Naive thymus-derived CD8-positive, alpha-beta T cell (primary cell): ENCODE measurements at regions of chr7 and their contacts with region 1.

Region 1: DNA sequence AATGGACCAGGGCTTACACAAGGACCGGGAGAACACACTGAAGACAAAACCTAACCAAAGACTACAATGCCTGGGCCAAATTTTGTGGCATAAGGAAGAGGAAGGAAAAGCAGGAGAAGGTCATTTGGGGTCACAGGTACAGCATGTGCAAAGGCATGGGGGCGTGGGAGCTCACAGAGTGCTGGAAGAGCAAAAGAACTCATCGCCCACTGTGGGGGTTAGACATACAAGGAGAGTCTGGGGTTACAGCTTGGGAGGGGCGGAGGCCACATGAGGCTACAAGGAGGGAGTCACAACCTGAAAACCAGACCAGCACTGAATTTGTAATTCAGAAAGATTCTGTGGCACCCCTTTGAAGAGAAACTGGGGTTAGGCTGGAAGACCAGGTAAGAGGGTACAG is 9.7 kb downstream of the PUS7 start:
- DNase-seq: no peak
- ATAC-seq: no peak
- H3K4me3 Mint-ChIP-seq: no peak overlapping the region
- H3K27ac Mint-ChIP-seq: peak overlapping the region in 3 of 10 donors; percentile 30 to 62 (median 60)
- H3K4me1 Mint-ChIP-seq: peaks cover 6 to 16% (median 13%) of the 10 kb centered on the region in 4 donors
- H3K27me3 Mint-ChIP-seq: no peaks in the 10 kb centered on the region

Region 2: DNA sequence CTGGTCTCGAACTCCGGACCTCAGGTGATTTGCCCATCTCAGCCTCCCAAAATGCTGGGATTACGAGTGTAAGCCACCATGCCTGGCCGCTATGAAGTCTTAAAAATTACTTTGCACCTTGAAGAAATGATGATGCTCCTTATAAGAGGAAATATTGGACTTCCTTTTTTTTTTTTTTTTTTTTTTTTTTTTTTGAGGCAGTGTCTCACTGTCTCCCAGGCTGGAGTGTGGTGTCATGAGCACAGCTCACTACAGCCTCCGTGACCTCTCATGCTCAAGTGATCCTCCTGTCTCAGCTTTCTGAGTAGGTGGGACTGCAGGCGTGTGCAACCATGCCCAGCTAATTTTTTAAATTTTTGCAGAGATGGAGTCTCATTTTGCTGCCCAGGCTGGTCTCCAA is 433.1 kb before region 1 on chr7:
- POLR2A ChIA-PET with region 1: interaction called, 11 read pairs
- DNase-seq: no peak
- ATAC-seq: no peak
- H3K4me3 Mint-ChIP-seq: no peak overlapping the region
- H3K27ac Mint-ChIP-seq: peak overlapping the region in 2 of 10 donors; percentile 22 to 44
- H3K4me1 Mint-ChIP-seq: peaks cover 4 to 27% (median 15%) of the 10 kb centered on the region in 4 donors
- H3K27me3 Mint-ChIP-seq: no peaks in the 10 kb centered on the region

Region 3: DNA sequence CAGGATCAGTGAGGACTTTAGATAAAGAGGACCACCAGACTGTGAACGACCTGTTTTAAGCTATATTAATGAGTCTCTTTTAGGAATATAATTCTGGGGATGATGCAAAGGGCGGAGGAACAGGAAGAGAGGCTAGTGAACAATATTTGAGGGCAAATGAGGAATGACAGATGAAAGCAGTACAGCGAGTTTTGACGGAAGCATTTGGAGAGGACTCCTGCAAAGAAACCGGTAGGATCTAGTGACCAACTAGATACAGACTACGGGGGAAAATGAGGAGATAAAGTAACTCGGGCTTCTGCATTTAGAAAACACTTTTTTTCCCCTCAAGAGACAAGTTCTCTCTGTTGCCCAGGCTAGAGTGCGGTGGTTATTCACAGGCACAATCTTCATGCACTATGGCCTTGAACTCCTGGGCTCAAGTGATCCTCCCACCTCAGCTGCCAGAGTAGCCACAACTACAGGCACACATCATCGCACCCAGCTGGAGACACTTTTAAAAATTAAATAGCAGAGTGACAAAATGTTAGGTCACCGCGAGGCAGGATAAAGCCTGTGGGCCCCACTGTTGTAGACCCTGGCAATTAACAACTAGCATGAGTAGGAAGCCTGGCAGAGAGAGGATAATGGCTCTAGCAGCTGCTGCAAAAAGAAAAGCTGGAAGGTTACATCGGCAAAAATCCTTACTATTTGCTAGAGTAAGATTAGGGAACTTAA is 266.9 kb before region 1 on chr7:
- POLR2A ChIA-PET with region 1: no interaction called
- DNase-seq: no peak
- ATAC-seq: no peak
- H3K4me3 Mint-ChIP-seq: no peak overlapping the region
- H3K27ac Mint-ChIP-seq: no peak overlapping the region
- H3K4me1 Mint-ChIP-seq: peaks cover 18 to 34% (median 27%) of the 10 kb centered on the region in 4 donors
- H3K27me3 Mint-ChIP-seq: no peaks in the 10 kb centered on the region

Region 4: GRCh38 chr7:105524840-105525239 is 12.4 kb after region 1 on chr7:
- POLR2A ChIA-PET with region 1: no interaction called
- DNase-seq: no peak
- ATAC-seq: no peak
- H3K4me3 Mint-ChIP-seq: peak overlapping the region in 1 of 10 donors; percentile 55
- H3K27ac Mint-ChIP-seq: peak overlapping the region in 1 of 10 donors; percentile 31
- H3K4me1 Mint-ChIP-seq: peaks cover 5 to 21% (median 11%) of the 10 kb centered on the region in 4 donors
- H3K27me3 Mint-ChIP-seq: no peaks in the 10 kb centered on the region

Region 5: DNA sequence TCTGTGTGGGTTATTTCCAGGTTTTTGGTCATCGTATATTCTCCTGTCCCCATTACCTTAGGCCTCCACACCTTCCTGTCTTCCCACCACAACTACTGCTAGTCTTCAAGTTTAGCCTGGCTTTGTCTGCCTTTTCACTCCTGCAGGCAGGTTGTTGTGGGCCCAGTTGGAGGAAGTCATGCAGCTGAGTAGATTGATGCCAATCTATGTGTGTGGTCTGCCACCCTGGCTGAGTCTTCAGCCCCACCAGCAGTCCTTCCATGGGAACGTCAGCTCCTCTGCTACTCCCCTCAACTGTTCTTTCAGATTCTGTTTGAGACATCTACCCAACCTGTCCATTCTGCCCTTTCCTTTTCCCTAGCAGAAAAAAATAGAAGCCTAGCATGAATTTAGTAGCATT is 25.9 kb after region 1 on chr7:
- POLR2A ChIA-PET with region 1: no interaction called
- DNase-seq: no peak
- ATAC-seq: no peak
- H3K4me3 Mint-ChIP-seq: no peak overlapping the region
- H3K27ac Mint-ChIP-seq: peak overlapping the region in 1 of 10 donors; percentile 24
- H3K4me1 Mint-ChIP-seq: peaks cover 6 to 34% (median 25%) of the 10 kb centered on the region in 4 donors
- H3K27me3 Mint-ChIP-seq: no peaks in the 10 kb centered on the region

Region 6: GRCh38 chr7:105589356-105590077 is 77.1 kb after region 1 on chr7:
- POLR2A ChIA-PET with region 1: no interaction called
- DNase-seq: peak; percentile 11 to 70 (median 37)
- ATAC-seq: peak; percentile 92
- H3K4me3 Mint-ChIP-seq: no peak overlapping the region
- H3K27ac Mint-ChIP-seq: peak overlapping the region in 4 of 10 donors; percentile 4 to 73 (median 12)
- H3K4me1 Mint-ChIP-seq: peaks cover 5 to 19% (median 12%) of the 10 kb centered on the region in 4 donors
- H3K27me3 Mint-ChIP-seq: no peaks in the 10 kb centered on the region